ENCODE measurements at regions of chr1 and their contacts with region 1.

Region 1: GRCh38 chr1:35947547-35947946 is 16.6 kb downstream of the AGO3 start:
- DNase-seq: no peak
- ATAC-seq: no peak
- H3K4me3 ChIP-seq: no peak overlapping the region
- H3K27ac ChIP-seq: no peak overlapping the region
- H3K4me1 ChIP-seq: peaks cover 6% of the 10 kb centered on the region
- H3K27me3 ChIP-seq: no peaks in the 10 kb centered on the region
- CTCF ChIP-seq: no peak
- POLR2A ChIP-seq: no peak
- RAD21 ChIP-seq: no peak

Region 2: DNA sequence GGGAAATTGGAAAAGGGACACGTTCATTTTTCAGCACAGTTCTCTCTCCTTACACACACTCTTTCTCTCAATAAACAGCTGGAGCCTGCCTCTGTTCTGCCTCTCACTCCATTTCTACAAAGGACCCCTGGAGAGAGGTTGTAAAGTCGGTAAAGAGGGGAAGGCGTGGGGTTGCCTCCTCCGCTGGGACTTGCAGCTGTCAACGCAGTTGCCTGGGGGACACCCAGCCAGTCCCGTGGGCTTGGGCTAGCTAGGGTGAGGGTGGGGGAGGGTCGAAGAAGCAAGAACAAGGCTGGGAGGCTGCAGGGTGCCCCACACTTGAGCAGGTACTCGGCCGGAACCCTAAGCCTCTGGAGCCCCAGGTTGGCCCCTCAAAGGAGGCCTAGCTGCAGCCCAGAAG is 256.5 kb before region 1 on chr1:
- CTCF ChIA-PET with region 1: no interaction called
- POLR2A ChIA-PET with region 1: no interaction called
- dilution Hi-C with region 1: no loop called
- in situ Hi-C with region 1: no loop called
- intact Hi-C with region 1: no loop called
- DNase-seq: no peak
- ATAC-seq: no peak
- H3K4me3 ChIP-seq: no peak overlapping the region
- H3K27ac ChIP-seq: no peak overlapping the region
- H3K4me1 ChIP-seq: no peaks in the 10 kb centered on the region
- H3K27me3 ChIP-seq: peaks cover 37% of the 10 kb centered on the region
- CTCF ChIP-seq: no peak
- POLR2A ChIP-seq: no peak
- RAD21 ChIP-seq: no peak

Region 3: GRCh38 chr1:35958558-35958957 is 11.0 kb after region 1 on chr1:
- CTCF ChIA-PET with region 1: interaction called, 11 read pairs
- POLR2A ChIA-PET with region 1: no interaction called
- dilution Hi-C with region 1: no loop called
- in situ Hi-C with region 1: no loop called
- intact Hi-C with region 1: no loop called
- DNase-seq: no peak
- ATAC-seq: no peak
- H3K4me3 ChIP-seq: no peak overlapping the region
- H3K27ac ChIP-seq: no peak overlapping the region
- H3K4me1 ChIP-seq: no peaks in the 10 kb centered on the region
- H3K27me3 ChIP-seq: no peaks in the 10 kb centered on the region
- CTCF ChIP-seq: no peak
- POLR2A ChIP-seq: no peak
- RAD21 ChIP-seq: no peak